Activated CD8-positive, alpha-beta memory T cell treated with anti-CD3 and anti-CD28 coated beads, Interleukin-2, amount 10 ng/mL, durations not matched to agents 7 days and 5 days (primary cell): ENCODE measurements at regions of chr2 and their contacts with region 1.

Region 1: DNA sequence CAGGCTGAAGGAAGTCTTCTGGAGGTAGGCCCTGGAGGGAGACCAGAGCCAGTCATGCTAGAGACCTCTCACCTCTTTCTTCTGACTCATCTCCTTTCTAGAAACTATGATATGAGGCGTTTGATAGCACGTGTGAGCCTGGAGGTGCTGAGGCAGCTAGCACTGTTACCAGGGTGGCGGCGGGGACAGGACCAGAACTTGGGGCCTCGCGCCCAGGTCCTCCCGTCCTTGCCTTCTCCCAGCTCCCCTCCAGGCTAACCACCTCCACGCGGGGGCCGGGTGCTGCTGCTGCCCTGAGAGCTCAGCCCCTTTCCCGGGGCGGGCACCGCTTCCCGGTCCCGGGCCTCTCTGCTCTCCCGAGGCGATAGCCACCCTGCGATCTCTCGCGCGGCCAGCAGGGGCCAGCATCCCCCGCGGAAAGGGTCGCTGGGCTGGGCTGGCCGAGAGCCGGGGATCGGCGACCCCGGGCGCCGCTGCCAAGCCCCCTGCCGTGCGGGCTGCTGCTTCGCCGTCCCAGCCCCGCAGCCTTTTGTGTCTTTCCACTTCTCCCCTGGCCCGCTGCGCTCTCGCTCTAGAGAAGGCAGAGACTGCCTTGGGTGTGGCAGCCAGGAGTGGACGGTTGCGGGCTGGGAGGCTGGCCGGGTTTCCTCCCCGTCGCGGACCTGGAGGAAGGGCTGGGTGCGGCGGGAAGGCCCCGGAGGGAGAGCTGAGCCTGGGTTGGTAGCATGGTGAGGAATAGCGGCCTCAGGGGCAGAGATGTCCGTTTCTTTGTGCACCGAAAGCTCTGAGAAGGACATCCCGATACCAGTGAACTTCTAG is 49.1 kb downstream of the TMEM17 start:
- DNase-seq: peak; percentile 69
- ATAC-seq: peak; percentile 95
- H3K4me3 Mint-ChIP-seq: peak overlapping the region; percentile 47
- H3K27ac Mint-ChIP-seq: no peak overlapping the region
- H3K4me1 Mint-ChIP-seq: peaks cover 4% of the 10 kb centered on the region
- H3K27me3 Mint-ChIP-seq: peaks cover 4% of the 10 kb centered on the region

Region 2: DNA sequence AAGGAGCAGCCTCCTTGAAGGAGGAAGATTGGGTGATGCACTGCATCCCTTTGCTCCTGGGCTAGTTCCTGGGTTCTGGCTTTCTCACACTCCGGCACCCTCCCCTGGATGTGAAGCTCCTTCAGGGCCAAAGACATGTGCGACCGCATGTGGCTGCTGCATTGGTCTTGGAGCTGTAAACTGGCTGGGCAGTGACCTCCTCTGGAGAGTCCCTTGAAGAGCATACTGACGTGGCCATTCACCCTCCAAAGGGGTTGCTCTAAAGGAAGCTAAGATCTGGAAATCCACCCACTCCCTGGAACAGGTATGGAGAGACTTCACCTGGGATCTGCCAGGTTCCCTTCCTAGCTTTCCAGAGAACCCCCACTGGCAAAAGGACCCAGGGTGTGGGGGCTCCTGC is 13.0 kb before region 1 on chr2:
- CTCF ChIA-PET with region 1: interaction called, 20 read pairs
- DNase-seq: no peak
- ATAC-seq: no peak
- H3K4me3 Mint-ChIP-seq: no peak overlapping the region
- H3K27ac Mint-ChIP-seq: no peak overlapping the region
- H3K4me1 Mint-ChIP-seq: no peaks in the 10 kb centered on the region
- H3K27me3 Mint-ChIP-seq: peaks cover 4% of the 10 kb centered on the region

Region 3: GRCh38 chr2:62467475-62468321 is 10.8 kb after region 1 on chr2:
- CTCF ChIA-PET with region 1: interaction called, 17 read pairs
- DNase-seq: no peak
- ATAC-seq: no peak
- H3K4me3 Mint-ChIP-seq: no peak overlapping the region
- H3K27ac Mint-ChIP-seq: no peak overlapping the region
- H3K4me1 Mint-ChIP-seq: no peaks in the 10 kb centered on the region
- H3K27me3 Mint-ChIP-seq: peaks cover 8% of the 10 kb centered on the region

Region 4: DNA sequence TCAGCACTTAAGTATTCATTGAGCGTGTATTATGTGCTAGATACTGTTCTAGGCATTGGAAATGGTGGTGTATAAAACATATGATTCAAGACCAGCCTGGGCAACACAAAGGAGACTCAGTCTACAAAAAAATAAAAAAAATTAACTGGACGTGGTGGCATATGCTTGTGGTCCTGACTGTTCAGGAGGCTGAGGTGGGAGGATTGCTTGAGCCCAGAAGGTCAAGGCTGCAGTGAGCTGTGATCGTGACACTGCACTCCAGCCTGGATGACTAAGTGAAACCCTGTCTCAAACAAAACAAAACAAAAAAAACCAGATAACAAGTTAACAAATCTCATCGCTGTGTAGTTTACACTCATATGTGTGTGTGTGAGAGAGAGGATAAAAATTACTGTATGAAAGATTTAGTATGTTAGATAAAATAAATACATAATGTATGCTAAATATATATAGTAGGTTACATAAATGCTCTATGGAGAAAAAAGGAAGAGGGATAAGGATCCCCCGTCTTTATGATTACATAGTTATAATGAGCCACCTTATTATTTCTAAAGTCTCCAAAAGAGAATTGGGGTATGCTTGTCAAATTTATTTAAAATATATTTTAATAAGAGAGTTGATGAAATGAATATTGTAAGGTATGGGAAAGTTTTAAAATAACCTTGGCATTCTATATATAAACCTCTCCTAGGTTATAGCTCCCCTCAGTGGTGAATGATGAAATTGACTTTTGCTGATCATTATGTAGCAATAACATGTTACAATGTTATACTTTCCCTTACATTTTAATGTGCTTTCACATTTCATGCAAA is 317.8 kb after region 1 on chr2:
- CTCF ChIA-PET with region 1: interaction called, 62 read pairs
- DNase-seq: no peak
- ATAC-seq: no peak
- H3K4me3 Mint-ChIP-seq: no peak overlapping the region
- H3K27ac Mint-ChIP-seq: no peak overlapping the region
- H3K4me1 Mint-ChIP-seq: no peaks in the 10 kb centered on the region
- H3K27me3 Mint-ChIP-seq: no peaks in the 10 kb centered on the region

Region 5: DNA sequence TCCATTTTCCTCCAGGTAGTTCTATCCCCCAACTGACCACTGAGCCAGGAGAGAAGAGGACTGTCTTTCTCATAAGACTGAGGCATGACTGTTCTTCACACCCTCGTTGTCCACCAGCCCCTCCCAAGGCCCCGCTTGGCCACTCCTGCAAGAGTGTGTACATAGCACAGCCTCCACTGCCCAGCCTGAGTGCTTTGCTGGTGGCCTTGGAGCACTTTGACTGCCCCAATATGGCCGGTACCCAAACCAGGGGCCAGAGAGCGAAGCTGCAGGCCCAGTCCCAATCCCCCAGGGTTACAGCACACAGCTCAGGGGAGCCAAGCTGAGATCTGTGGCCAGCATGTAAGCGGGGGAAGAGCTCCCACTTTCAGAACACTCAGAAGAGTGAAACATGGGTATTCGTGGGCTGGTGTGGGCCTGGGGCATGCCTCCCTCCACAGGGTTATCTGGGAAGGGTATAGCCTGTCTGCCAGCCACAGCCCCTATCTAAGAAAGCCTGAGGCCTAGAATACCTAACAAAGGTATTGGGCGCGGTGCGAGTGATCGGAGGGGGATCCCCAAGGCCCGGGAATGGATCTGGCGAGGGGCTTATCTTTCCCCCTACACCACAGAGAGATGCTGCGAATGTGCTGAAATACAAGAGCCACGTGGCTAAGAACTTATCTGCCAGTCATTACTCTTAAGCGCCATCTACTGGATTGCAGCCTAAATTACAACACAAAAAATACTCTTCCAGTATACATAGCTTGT is 967.6 kb after region 1 on chr2:
- CTCF ChIA-PET with region 1: interaction called, 10 read pairs
- DNase-seq: no peak
- ATAC-seq: peak; percentile 83
- H3K4me3 Mint-ChIP-seq: no peak overlapping the region
- H3K27ac Mint-ChIP-seq: no peak overlapping the region
- H3K4me1 Mint-ChIP-seq: peaks cover 5% of the 10 kb centered on the region
- H3K27me3 Mint-ChIP-seq: no peaks in the 10 kb centered on the region